ENCODE measurements at regions of chr1 and their contacts with region 1.

Region 1: GRCh38 chr1:46247436-46248121 is at the start of gene RAD54L:
- H3K4me3 ChIP-seq: peak within 1 kb of the TSS; percentile 83
- H3K27ac ChIP-seq: peak within 1 kb of the TSS; percentile 59
- H3K4me1 ChIP-seq: peaks cover 4% of the 10 kb centered on the region; the same call in 1 of the 2 replicates
- CTCF ChIP-seq: no peak

Region 2: DNA sequence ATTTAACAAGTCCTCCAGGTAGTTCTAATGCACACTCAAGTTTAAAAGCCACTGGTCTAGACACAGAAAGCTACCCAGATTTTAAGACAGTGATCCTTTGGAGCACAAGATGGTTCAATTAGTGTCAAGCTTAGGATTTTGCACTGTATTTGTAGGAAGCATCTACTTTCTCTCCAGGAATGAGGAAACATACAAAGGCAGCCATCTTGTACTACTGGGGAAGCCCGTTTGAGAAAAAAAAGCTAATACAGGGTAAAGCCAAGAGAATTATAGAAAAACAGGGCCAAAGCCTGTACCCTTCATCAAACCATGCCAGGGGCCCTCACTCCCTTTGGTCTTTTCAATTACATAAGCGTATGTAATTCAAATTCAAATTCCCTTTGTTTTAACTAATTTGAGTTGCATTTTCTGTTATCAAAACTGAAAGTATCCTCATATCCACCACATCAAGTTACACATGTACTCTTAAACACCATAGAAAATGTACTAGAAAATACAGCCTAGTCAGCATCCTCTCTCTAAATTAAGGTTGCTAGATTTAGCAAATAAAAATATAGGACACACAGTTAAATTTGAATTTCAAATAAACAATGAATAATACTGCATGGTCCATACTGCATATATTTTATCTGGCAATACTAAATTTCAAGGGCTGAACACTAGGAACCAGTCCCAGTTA is 132.5 kb before region 1 on chr1:
- CTCF ChIA-PET with region 1: no interaction called
- POLR2A ChIA-PET with region 1: interaction called, 10 read pairs
- H3K4me3 ChIP-seq: no peak overlapping the region
- H3K27ac ChIP-seq: no peak overlapping the region
- H3K4me1 ChIP-seq: 0 out of 2 replicates have a peak, but pooled peaks cover 3% of the 10 kb centered on the region
- CTCF ChIP-seq: no peak

Region 3: DNA sequence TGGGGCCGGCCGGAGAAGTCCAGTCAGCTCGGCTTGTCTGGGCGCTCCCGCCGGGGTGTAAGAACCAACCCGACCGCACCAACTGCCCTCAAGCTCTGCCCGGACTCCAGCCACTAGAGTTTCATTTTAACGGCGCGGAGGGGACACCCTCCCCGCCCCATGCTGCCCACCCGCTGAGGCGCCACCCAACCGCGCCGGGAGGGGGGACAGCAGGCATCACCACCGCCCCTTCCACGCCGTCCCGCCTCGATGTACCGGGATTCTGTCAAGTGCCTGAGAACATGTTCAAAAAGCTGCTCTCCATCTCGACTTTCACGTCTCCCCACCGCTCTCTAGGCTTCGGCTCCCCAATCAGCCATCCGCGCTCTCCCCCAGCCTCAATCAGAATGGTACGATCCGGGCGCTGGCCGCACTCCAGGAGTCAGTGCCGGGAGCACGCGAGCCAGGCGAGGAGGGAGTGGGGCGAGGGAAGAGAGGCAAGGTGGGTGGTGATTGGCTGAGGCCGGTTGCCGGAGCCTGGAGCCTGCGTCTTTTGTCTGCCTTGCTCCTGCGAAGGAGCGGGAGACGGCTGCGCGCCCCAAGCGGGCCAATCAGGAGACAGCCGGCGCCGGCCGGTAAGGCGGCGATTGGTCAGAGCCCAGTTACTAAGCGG is 114.9 kb before region 1 on chr1 and contains the start of gene PIK3R3:
- CTCF ChIA-PET with region 1: interaction called, 3 read pairs
- POLR2A ChIA-PET with region 1: interaction called, 16 read pairs
- H3K4me3 ChIP-seq: peak within 1 kb of the TSS; percentile 66
- H3K27ac ChIP-seq: peak within 1 kb of the TSS; percentile 100
- H3K4me1 ChIP-seq: peaks cover 10% of the 10 kb centered on the region
- CTCF ChIP-seq: peak; percentile 52; the same call in 1 of the 2 replicates

Region 4: GRCh38 chr1:46236882-46237281 is 10.7 kb before region 1 on chr1:
- CTCF ChIA-PET with region 1: interaction called, 17 read pairs
- POLR2A ChIA-PET with region 1: interaction called, 4 read pairs
- H3K4me3 ChIP-seq: no peak overlapping the region
- H3K27ac ChIP-seq: no peak overlapping the region
- H3K4me1 ChIP-seq: no peaks in the 10 kb centered on the region
- CTCF ChIP-seq: no peak

Region 5: GRCh38 chr1:46285730-46286477 is 38.3 kb after region 1 on chr1:
- CTCF ChIA-PET with region 1: no interaction called
- POLR2A ChIA-PET with region 1: interaction called, 13 read pairs
- H3K4me3 ChIP-seq: no peak overlapping the region
- H3K27ac ChIP-seq: 0 out of 2 replicates have a peak overlapping the region, but pooled peaks have one; percentile 1
- H3K4me1 ChIP-seq: no peaks in the 10 kb centered on the region
- CTCF ChIP-seq: no peak

Region 6: DNA sequence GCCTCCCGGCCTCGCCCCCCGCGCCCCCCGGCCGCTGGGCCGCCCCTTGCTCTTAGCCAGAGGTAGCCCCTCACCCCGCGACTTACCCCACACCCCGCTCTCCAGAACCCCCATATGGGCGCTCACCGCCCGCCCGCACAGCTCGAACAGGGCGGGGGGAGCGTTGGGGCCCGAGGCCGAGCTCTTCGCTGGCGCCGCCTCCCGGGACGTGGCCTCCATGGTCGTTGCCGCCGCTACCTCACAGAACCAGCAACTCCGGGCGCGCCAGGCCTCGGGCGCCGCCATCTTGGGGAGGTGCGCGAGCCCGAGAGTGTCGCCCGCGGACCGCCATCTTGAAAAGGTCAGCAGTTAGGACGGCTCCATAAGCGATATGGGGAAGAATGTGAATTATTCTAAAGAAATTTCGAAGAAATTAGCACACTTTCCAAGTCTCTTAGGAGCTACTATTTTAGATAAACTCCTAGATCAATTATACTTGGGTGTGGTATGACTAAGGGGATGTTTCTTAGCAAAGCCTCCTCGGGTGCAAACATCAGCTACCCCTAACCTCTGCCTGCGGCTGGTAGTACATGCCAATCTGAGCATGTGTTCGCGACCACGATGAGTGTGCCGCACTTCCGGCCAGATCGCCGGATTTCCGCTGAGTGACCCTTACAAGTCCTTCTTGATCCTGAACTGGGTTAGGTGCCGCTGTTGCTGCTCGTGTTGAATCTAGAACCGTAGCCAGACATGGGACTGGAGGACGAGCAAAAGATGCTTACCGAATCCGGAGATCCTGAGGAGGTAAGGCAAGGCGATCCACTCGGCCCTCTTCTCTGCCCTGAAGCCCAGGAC is 55.7 kb after region 1 on chr1 and contains the starts of genes LRRC41 and UQCRH:
- CTCF ChIA-PET with region 1: interaction called, 3 read pairs
- POLR2A ChIA-PET with region 1: interaction called, 10 read pairs
- H3K4me3 ChIP-seq: peak within 1 kb of the TSS; percentile 88
- H3K27ac ChIP-seq: peak within 1 kb of the TSS; percentile 99
- H3K4me1 ChIP-seq: no peaks in the 10 kb centered on the region
- CTCF ChIP-seq: peak; percentile 12; the same call in 1 of the 2 replicates

Region 7: DNA sequence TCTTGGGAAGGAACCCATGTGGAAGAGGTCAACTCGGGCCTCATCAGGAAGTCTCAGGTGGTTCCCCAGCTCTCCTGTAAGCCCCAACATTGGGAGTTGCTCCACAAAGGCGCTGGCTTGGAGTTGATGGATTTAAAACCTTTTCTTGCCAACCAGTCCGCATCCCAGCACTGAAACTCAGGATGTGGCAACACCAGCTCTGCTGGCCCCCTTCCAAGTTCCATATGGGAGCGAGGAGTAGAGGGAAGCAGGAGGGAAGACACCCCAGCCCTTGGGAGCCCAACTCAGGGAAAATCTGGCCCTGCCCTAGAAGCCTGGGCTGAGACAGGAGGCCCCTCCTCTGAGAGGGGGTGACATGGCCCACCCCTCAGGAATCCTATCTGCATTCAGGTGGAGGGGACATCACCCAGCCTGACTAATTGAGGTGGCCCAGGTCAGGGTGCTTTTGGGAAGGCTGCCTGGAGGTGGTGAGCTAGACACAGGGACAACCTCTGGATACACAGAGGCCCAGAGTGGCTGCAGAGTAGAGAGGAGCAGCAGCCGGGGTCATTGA is 208.9 kb after region 1 on chr1:
- CTCF ChIA-PET with region 1: no interaction called
- POLR2A ChIA-PET with region 1: no interaction called
- H3K4me3 ChIP-seq: no peak overlapping the region
- H3K27ac ChIP-seq: no peak overlapping the region
- H3K4me1 ChIP-seq: no peaks in the 10 kb centered on the region
- CTCF ChIP-seq: no peak